ENCODE measurements at regions of chr12 and their contacts with region 1.

Region 1: GRCh38 chr12:117139025-117139717 is 40.0 kb upstream of the TESC start:
- DNase-seq: peak; percentile 41
- H3K4me3 ChIP-seq: peak overlapping the region in 1 of 3 experiments; percentile 2
- H3K27ac ChIP-seq: no peak overlapping the region
- H3K4me1 ChIP-seq: peaks cover under 1% of the 10 kb centered on the region
- H3K27me3 ChIP-seq: no peaks in the 10 kb centered on the region
- CTCF ChIP-seq: no peak
- POLR2A ChIP-seq: no peak

Region 2: GRCh38 chr12:117155278-117156060 is 16.3 kb after region 1 on chr12:
- CTCF ChIA-PET with region 1: interaction called, 12 read pairs
- POLR2A ChIA-PET with region 1: no interaction called
- dilution Hi-C with region 1: no loop called
- intact Hi-C with region 1: no loop called
- DNase-seq: peak; percentile 12
- H3K4me3 ChIP-seq: no peak overlapping the region
- H3K27ac ChIP-seq: no peak overlapping the region
- H3K4me1 ChIP-seq: no peaks in the 10 kb centered on the region
- H3K27me3 ChIP-seq: no peaks in the 10 kb centered on the region
- CTCF ChIP-seq: peak; percentile 66 to 78
- POLR2A ChIP-seq: no peak

Region 3: GRCh38 chr12:117774941-117775775 is 636.0 kb after region 1 on chr12:
- CTCF ChIA-PET with region 1: no interaction called
- POLR2A ChIA-PET with region 1: no interaction called
- dilution Hi-C with region 1: no loop called
- intact Hi-C with region 1: no loop called
- DNase-seq: peak; percentile 76
- H3K4me3 ChIP-seq: no peak overlapping the region
- H3K27ac ChIP-seq: no peak overlapping the region
- H3K4me1 ChIP-seq: no peaks in the 10 kb centered on the region
- H3K27me3 ChIP-seq: no peaks in the 10 kb centered on the region
- CTCF ChIP-seq: no peak
- POLR2A ChIP-seq: no peak